ENCODE measurements at regions of chr2 and their contacts with region 1.

Region 1: GRCh38 chr2:219388127-219388844 is 574 bp upstream of the DNPEP start:
- DNase-seq: peak; percentile 96
- H3K4me3 Mint-ChIP-seq: peak overlapping the region; percentile 65
- H3K27ac Mint-ChIP-seq: peak overlapping the region; percentile 75
- H3K4me1 Mint-ChIP-seq: peaks cover 7% of the 10 kb centered on the region
- H3K27me3 Mint-ChIP-seq: peaks cover 8% of the 10 kb centered on the region

Region 2: DNA sequence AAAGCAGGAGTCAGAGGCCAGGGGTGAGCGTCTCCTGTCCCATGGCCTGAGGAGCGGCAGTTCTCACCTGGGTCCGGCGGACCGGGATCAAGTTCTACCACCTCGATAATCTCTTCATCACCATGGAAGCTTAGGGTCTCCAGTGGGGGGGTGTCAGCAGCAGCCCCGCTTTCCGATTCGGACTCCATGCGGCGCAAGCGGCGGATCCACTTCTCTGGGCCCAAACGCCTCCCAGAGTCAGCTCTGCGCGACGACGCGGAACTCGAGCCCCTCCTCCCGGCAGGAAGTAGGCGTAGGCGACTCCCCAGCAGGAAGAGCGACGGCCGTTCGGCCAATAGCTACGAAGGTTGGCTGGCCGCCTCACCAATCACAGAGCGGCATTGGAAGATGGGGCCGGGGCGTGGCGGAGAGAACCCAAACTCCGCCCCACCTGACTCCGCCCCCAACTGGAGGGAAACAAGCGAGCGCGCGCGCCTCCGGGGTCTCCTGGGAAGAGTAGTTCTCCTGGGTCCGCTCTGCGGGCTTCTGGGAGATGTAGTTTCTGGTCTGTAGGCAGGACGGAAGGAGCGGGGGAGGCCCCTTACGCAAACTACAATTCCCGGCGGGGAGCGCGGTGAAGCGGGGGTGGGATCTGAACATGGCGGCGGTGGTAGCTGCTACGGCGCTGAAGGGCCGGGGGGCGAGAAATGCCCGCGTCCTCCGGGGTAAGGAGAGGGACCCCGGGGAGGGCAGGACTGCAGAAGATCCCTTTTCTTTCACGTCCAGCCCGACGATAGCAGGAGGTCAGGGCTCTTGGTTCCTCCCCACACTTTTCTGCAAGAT is 1118.2 kb before region 1 on chr2 and contains the starts of genes AAMP and PNKD:
- intact Hi-C with region 1: loop called (anchors 5 kb)
- DNase-seq: peak; percentile 100
- H3K4me3 Mint-ChIP-seq: peak within 1 kb of the TSS; percentile 94
- H3K27ac Mint-ChIP-seq: peak within 1 kb of the TSS; percentile 93
- H3K4me1 Mint-ChIP-seq: peaks cover 20% of the 10 kb centered on the region
- H3K27me3 Mint-ChIP-seq: no peaks in the 10 kb centered on the region
- total RNA-seq, gene AAMP: 82.4 and 82.9 TPM in 2 replicates
- total RNA-seq, gene PNKD: 19.9 and 20.8 TPM in 2 replicates

Region 3: GRCh38 chr2:219253753-219254590 is 134.3 kb before region 1 on chr2 and contains the start of gene TUBA4A:
- intact Hi-C with region 1: loop called (anchors 1 kb)
- DNase-seq: peak; percentile 84
- H3K4me3 Mint-ChIP-seq: peak within 1 kb of the TSS; percentile 77
- H3K27ac Mint-ChIP-seq: peak within 1 kb of the TSS; percentile 92
- H3K4me1 Mint-ChIP-seq: peaks cover 46% of the 10 kb centered on the region
- H3K27me3 Mint-ChIP-seq: no peaks in the 10 kb centered on the region
- total RNA-seq, gene TUBA4A: 220 and 231 TPM in 2 replicates

Region 4: GRCh38 chr2:219498280-219499057 is 110.2 kb after region 1 on chr2 and contains the start of gene GMPPA:
- intact Hi-C with region 1: loop called (anchors 1 kb)
- DNase-seq: peak; percentile 95
- H3K4me3 Mint-ChIP-seq: peak within 1 kb of the TSS; percentile 96
- H3K27ac Mint-ChIP-seq: peak within 1 kb of the TSS; percentile 91
- H3K4me1 Mint-ChIP-seq: peaks cover 33% of the 10 kb centered on the region
- H3K27me3 Mint-ChIP-seq: peaks cover 43% of the 10 kb centered on the region
- total RNA-seq, gene GMPPA: 52.0 and 52.9 TPM in 2 replicates

Region 5: GRCh38 chr2:219521066-219521880 is 133.0 kb after region 1 on chr2:
- intact Hi-C with region 1: no loop called
- DNase-seq: no peak
- H3K4me3 Mint-ChIP-seq: no peak overlapping the region
- H3K27ac Mint-ChIP-seq: no peak overlapping the region
- H3K4me1 Mint-ChIP-seq: peaks cover 2% of the 10 kb centered on the region
- H3K27me3 Mint-ChIP-seq: peaks cover 73% of the 10 kb centered on the region

Region 6: DNA sequence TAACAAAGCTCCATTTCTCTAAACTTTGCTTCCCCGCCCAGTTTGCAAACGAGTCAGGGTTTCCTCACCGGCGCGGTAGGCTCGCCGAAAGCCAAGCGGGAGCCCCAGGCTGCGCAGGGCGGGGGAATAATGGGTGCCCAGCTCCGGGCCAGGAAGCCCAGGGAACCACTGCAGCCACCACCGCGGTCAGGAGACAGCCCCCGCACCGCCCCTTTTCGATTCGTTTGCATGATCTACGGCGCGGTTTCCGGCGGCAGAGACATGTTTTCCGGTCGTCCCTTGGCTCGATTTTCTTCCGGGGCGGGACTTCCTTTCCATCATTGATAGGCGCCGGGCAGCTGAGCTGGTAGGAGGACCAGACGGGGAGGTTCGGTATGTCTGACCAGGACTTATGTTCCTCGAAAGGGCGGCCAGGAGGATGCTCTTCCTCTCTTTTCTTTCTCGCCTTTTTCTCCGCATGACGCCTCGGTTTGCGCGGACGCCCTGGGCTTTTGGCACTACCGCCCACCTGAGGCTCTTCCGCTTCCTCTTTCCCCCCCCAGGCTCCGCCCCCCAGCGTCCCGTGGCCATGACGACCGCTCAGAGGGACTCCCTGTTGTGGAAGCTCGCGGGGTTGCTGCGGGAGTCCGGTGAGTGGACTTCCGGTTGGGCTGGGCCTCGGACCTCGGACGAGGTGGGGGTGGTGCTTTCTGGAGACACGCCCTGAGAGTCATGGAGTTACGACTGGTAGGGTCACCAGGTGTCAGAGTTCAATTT is 209.4 kb after region 1 on chr2 and contains the start of gene STK11IP:
- intact Hi-C with region 1: loop called (anchors 2 kb)
- DNase-seq: peak; percentile 89
- H3K4me3 Mint-ChIP-seq: peak within 1 kb of the TSS; percentile 93
- H3K27ac Mint-ChIP-seq: peak within 1 kb of the TSS; percentile 90
- H3K4me1 Mint-ChIP-seq: peaks cover 18% of the 10 kb centered on the region
- H3K27me3 Mint-ChIP-seq: no peaks in the 10 kb centered on the region
- total RNA-seq, gene STK11IP: 32.5 and 38.1 TPM in 2 replicates

Region 7: DNA sequence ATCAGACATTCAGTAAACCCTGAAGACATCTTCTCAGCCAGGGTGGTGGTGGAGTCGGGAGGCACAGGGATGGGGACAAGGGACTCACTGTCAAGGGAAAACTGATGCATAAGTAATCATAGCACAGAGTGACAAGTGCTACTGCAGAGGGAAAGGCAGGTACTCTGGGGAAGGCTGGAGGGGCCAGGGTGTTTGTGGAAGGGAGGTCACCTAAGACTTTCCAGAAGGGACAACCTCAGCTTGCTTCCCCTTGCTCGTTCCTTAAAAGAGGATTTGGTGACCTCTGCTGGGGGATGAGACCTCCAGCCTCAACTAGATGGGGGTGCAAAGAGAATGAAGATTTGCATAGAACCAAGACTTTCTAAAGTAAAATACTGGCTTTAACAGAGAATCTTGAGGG is 338.6 kb after region 1 on chr2:
- intact Hi-C with region 1: no loop called
- DNase-seq: no peak
- H3K4me3 Mint-ChIP-seq: no peak overlapping the region
- H3K27ac Mint-ChIP-seq: no peak overlapping the region
- H3K4me1 Mint-ChIP-seq: no peaks in the 10 kb centered on the region
- H3K27me3 Mint-ChIP-seq: no peaks in the 10 kb centered on the region